Body of pancreas (tissue), 4 donors: ENCODE measurements at regions of chr17 and their contacts with region 1.

Region 1: DNA sequence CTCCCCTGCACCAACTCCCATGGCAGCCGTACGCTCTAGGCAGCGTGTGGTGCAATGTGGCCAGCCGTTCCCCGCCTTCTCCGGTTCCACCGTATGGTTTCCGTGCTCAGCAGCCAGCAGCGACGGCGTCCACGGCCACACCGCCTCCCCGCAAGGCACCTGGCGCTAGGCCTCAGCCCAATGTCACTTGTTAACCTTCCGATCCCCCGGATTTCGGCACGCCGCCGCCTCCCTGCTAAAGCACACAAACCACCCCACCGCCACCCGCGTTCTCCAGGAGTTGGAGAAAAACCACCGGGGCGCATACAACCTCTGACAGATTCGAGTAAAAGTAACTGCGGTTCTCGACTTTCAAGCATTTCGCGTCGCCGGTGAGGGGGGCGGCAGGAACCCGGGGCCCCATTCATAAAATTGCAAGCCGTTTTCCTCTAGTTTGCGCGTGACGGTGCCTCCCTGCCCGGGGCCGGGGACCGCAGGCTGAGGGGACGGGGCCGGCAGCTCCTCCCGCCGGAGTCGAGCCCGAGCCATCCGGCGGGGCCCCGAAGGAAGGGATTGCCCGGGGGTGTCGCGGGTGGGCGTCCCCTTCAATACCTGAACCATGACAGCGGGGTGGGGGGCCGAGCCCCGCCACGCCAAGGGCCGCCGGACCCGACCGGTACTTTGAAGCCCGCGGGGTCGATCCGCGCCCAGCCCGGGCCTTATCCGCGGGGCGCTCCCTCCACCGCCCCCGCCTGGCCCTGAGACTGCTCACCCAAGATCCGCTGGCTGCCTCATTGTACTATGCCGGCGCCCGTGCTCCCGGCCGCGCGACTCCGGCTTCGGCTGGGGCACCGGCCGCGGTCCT is at the start of gene TEX2:
- DNase-seq: peak; percentile 70 to 82 (median 74)
- ATAC-seq: peak; percentile 45
- H3K4me3 ChIP-seq: peak within 1 kb of the TSS; percentile 50 to 84
- H3K27ac ChIP-seq: peak within 1 kb of the TSS; percentile 92 to 93 (median 92)
- H3K4me1 ChIP-seq: peaks cover 50% of the 10 kb centered on the region
- H3K27me3 ChIP-seq: no peaks in the 10 kb centered on the region
- CTCF ChIP-seq: no peak
- POLR2A ChIP-seq: peak; percentile 69 to 82 (median 74)
- total RNA-seq, gene TEX2: 36.1 to 82.1 TPM

Region 2: DNA sequence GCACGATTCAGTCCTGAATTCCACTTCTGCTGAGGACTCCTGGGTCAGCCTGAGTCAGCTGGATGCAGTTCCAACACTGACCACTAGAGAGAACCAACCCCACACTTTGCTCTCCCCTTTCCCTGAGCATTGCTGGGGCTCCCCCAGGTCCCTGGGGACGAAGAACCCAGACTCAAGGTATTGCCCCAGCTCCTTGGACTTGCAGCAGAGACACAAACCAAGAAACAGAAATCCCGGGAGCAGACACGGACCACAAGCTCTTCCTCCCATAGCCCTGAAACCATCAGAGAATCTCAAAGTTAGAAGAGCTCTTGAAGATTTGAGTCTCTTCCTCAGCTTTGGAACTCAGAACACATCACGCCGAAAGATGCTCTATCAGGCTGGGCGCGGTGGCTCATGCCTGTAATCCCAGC is 343.3 kb before region 1 on chr17:
- intact Hi-C with region 1: loop called (anchors 10 kb)
- DNase-seq: peak; percentile 59 to 67 (median 61)
- ATAC-seq: peak; percentile 87
- H3K4me3 ChIP-seq: no peak overlapping the region
- H3K27ac ChIP-seq: no peak overlapping the region
- H3K4me1 ChIP-seq: no peaks in the 10 kb centered on the region
- H3K27me3 ChIP-seq: no peaks in the 10 kb centered on the region
- CTCF ChIP-seq: peak; percentile 79 to 96 (median 92)
- POLR2A ChIP-seq: no peak